ENCODE measurements at regions of chr16 and their contacts with region 1.

Region 1: DNA sequence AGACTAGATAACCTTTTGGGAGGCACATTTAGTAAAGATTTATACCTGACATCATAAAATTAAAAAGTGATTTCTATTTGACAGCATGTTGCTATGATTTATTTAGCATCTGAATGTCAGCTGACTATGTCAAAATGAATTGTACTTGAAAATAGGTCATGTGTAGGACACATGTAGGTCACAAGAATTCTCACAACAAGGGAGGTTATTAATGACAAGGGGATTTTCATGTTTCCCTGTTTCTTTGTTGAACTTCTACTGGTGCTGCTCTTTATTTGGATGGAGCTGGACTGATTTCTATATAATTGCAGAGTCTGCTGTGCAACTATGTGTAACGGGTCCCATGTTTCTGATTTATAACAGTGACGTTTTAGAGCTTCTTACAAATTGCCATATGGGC is 144.4 kb downstream of the CNTNAP4 start:
- DNase-seq: no peak
- ATAC-seq: no peak
- H3K4me3 ChIP-seq: no peak overlapping the region
- H3K27ac ChIP-seq: no peak overlapping the region
- H3K4me1 ChIP-seq: no peaks in the 10 kb centered on the region
- H3K27me3 ChIP-seq: no peaks in the 10 kb centered on the region
- CTCF ChIP-seq: no peak

Region 2: DNA sequence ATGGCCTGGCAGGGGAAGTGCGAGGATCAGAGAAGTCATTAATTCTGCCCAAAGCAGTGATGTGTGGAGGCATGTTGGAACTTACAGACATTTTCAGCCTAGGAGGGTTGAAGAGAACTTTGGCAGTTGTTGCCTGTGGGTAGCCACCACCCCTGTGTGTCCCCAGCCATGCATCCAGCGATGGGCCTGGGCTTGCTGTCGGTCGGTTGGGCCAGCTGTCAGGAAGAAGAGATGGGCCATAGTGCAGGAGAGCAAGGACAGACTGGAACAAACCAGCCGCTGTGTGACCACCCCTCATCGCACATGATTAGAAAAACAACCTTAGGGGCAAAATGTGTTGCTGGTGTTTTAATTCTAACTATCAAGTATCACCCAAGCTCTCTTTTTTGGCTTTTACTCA is 29.3 kb after region 1 on chr16:
- CTCF ChIA-PET with region 1: no interaction called
- POLR2A ChIA-PET with region 1: interaction called, 11 read pairs
- in situ Hi-C with region 1: no loop called
- intact Hi-C with region 1: no loop called
- DNase-seq: no peak
- ATAC-seq: no peak
- H3K4me3 ChIP-seq: no peak overlapping the region
- H3K27ac ChIP-seq: no peak overlapping the region
- H3K4me1 ChIP-seq: no peaks in the 10 kb centered on the region
- H3K27me3 ChIP-seq: no peaks in the 10 kb centered on the region
- CTCF ChIP-seq: no peak